Posterior vena cava (tissue), 2 donors: ENCODE measurements at regions of chr15 and their contacts with region 1.

Region 1: GRCh38 chr15:35444557-35445204 is 101.3 kb downstream of the DPH6 start:
- DNase-seq: no peak

Region 2: GRCh38 chr15:35078221-35078915 is 366.3 kb before region 1 on chr15:
- intact Hi-C with region 1: loop called in 1 of 2 experiments (anchors 5 kb)
- DNase-seq: no peak

Region 3: GRCh38 chr15:35289024-35289617 is 155.6 kb before region 1 on chr15:
- intact Hi-C with region 1: loop called in 1 of 2 experiments (anchors 5 kb)
- DNase-seq: no peak

Region 4: DNA sequence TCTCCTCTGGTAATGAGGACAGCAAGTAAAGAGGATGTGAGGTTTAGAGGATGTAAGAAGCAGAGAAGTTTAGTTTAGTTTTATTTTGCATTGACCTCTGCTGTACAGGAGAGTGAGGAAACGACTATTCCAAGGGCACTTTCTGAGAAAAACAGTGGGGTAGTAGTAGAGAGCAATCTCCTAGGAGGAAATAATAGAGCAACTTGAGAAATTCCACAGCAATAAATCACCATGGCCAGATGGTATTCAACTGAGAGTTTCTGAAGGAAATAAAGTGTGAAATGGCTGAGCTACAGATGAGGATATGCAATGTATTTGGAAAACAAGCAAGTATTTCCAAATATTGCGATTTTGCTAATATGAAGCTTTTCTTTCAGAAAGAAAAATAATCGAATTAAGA is 17.6 kb before region 1 on chr15:
- intact Hi-C with region 1: no loop called
- DNase-seq: no peak

Region 5: GRCh38 chr15:35858707-35859106 is 414.0 kb after region 1 on chr15:
- intact Hi-C with region 1: no loop called
- DNase-seq: no peak